ENCODE measurements at regions of chr3 and their contacts with region 1.

Region 1: DNA sequence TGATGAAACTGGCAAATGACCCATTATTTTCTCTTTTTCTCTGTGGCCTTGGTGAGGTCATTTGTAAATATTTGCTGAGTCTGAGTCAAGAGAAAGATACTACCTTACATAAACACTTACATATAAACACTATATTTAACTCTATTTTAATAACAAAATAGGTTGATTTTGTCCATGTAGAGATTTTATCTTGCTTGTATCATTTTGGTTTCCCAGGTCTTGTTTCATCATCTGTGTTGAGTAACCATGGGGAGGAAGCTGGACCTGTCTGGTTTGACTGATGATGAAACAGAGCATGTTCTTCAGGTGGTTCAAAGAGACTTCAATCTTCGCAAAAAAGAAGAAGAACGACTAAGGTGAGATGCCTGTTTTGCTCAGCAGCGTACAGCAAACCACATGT is 91.2 kb downstream of the MYRIP start:
- DNase-seq: no peak
- H3K4me3 ChIP-seq: no peak overlapping the region
- H3K27ac ChIP-seq: no peak overlapping the region
- H3K4me1 ChIP-seq: no peaks in the 10 kb centered on the region
- H3K27me3 ChIP-seq: no peaks in the 10 kb centered on the region
- CTCF ChIP-seq: no peak
- POLR2A ChIP-seq: no peak

Region 2: GRCh38 chr3:38725726-38726419 is 1174.7 kb before region 1 on chr3:
- intact Hi-C with region 1: loop called (anchors 5 kb)
- DNase-seq: no peak
- H3K4me3 ChIP-seq: no peak overlapping the region
- H3K27ac ChIP-seq: no peak overlapping the region
- H3K4me1 ChIP-seq: no peaks in the 10 kb centered on the region
- H3K27me3 ChIP-seq: peaks cover 0 to 6% of the 10 kb centered on the region in 2 donors
- CTCF ChIP-seq: no peak
- POLR2A ChIP-seq: no peak

Region 3: GRCh38 chr3:39962581-39962980 is 62.0 kb after region 1 on chr3:
- intact Hi-C with region 1: no loop called
- DNase-seq: no peak
- H3K4me3 ChIP-seq: no peak overlapping the region
- H3K27ac ChIP-seq: peak overlapping the region in 1 of 2 donors; percentile 60
- H3K4me1 ChIP-seq: no peaks in the 10 kb centered on the region
- H3K27me3 ChIP-seq: no peaks in the 10 kb centered on the region
- CTCF ChIP-seq: no peak
- POLR2A ChIP-seq: no peak

Region 4: GRCh38 chr3:40366203-40367162 is 465.9 kb after region 1 on chr3:
- intact Hi-C with region 1: no loop called
- DNase-seq: no peak
- H3K4me3 ChIP-seq: no peak overlapping the region
- H3K27ac ChIP-seq: no peak overlapping the region
- H3K4me1 ChIP-seq: no peaks in the 10 kb centered on the region
- H3K27me3 ChIP-seq: no peaks in the 10 kb centered on the region
- CTCF ChIP-seq: no peak
- POLR2A ChIP-seq: no peak